SK-N-SH (cell line): ENCODE measurements at regions of chr14 and their contacts with region 1.

Region 1: DNA sequence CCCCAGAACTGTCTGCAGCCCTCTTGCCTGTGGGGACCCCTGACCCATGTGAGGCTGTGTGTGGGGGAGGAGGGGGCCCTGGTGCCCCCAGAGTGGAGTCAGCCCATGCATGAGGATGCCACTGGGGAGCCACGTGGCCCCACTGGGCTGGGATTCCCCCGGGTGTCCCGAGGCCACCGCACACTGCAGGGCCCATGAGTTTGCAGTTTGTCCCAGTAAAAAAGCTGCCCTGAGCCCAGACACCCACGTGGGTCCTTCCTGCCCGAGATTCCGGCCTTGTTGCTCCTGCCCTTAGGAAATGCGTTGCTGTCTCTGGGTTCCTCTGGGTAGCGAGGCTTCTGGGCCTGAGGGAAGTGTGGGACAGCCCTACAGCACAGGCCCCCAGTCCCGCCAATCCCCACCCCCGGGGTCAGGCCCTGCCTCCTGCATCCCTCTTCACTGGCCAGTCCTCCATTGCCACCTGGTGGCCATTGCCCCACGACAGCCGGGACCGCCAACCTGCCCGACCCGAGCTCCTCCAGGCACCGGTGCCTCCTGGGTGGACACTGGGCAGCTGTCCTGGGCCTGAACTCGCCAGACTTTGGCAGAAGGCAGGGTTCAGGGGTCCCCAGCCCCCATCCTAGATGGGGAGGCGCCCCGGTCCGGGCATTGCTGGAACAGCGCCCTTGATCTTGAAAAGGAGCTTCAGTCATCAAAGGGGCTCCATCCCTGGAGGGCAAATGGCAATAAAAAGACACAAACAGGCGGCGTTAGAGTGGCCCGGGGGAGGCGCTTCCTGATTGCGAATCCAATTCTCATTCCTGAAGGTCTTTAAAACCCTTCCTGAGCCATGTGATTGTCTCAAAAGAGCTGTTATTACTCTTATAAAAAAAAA is 15.6 kb upstream of the C14orf180 start:
- DNase-seq: peak; percentile 98
- H3K4me3 ChIP-seq: no peak overlapping the region; a peak in 1 of 4 replicates
- H3K27ac ChIP-seq: peak overlapping the region in 1 of 2 experiments; percentile 71; a peak in 2 of 4 replicates
- H3K4me1 ChIP-seq: peaks cover 0 to 65% of the 10 kb centered on the region in 2 experiments; a peak in 1 of 4 replicates
- H3K27me3 ChIP-seq: no peaks in the 10 kb centered on the region
- CTCF ChIP-seq: peak; percentile 78
- EP300 ChIP-seq: no peak
- RAD21 ChIP-seq: peak; percentile 94

Region 2: DNA sequence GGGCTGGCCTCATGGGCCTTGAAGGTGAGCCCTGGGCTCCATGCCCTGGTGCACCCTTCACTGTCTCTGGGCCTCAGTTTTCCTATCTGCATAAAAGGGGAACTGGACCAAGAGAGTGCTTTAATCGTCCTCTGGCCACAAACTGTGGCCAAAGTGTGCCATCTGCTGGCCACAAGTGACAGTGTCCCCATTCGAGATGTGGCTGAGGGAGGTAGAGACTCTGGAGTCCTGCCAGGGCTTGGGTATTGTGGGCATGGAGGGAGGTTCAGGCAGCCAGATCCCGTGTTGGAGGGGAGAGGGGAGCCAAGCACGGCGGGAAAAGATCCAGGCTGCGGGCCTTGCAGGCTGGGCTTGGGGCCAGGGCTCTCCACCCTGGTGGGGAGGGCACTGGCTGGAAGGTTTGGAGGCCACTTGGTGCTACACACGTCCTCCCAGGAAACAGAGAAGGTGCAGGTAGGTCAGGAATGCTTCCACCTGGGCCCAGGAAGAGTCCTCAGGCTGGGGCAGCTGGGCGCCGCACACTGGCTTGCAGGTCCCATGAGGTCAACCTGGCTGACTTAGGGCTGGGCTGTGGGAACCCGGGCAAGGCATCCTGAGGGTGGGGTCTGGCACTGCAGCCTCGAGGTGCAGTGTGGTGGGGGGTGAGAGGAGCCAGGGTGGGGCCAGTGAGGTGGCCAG is 432.9 kb before region 1 on chr14:
- CTCF ChIA-PET with region 1: interaction called, 21 read pairs
- POLR2A ChIA-PET with region 1: no interaction called
- DNase-seq: peak; percentile 87
- H3K4me3 ChIP-seq: peak overlapping the region in 1 of 2 experiments; percentile 44; a peak in 1 of 4 replicates
- H3K27ac ChIP-seq: no peak overlapping the region
- H3K4me1 ChIP-seq: peaks cover 0 to 19% of the 10 kb centered on the region in 2 experiments; a peak in 1 of 4 replicates
- H3K27me3 ChIP-seq: peaks cover 9% of the 10 kb centered on the region
- CTCF ChIP-seq: peak; percentile 51
- EP300 ChIP-seq: no peak
- RAD21 ChIP-seq: peak; percentile 97

Region 3: GRCh38 chr14:104157016-104157928 is 406.7 kb before region 1 on chr14:
- CTCF ChIA-PET with region 1: interaction called, 23 read pairs
- POLR2A ChIA-PET with region 1: interaction called, 4 read pairs
- DNase-seq: peak; percentile 81
- H3K4me3 ChIP-seq: no peak overlapping the region
- H3K27ac ChIP-seq: peak overlapping the region in 1 of 2 experiments; percentile 96; a peak in 2 of 4 replicates
- H3K4me1 ChIP-seq: peaks cover 0 to 92% of the 10 kb centered on the region in 2 experiments; a peak in 1 of 4 replicates
- H3K27me3 ChIP-seq: no peaks in the 10 kb centered on the region
- CTCF ChIP-seq: peak; percentile 16
- EP300 ChIP-seq: no peak
- RAD21 ChIP-seq: peak; percentile 50

Region 4: DNA sequence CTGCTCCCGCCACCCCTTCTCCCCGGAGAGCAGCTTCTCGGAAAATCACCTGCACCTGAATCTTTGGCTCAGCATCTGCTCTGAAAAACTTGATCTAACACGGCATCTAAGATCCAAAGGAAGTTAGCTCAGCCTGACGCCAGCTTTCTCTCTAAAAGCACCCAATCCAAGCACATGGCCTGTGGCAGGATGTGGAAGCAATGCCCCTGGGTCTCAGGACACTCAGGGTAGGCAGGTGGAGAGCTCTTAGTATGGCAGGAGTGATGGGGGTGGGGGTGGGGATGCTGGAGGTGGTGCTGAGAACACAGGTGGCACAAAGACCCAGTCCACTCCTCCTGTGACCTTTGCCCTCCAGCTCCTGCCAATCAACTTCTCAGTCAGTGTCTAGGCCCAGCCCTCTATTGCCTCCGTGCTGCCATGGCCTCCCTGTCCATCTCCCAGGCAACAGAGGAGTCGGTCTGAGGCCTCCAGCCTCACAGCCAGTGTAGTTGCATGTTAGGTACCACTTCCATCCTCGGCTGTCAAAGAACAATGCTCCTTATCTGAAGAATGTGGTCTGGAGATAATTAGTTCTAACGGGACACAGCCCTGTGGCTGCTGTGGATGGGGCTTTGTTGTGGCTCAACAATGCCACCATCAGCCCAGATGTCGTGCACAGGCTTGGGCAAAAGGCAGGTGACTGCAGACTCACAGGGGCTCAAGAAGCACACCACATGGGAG is 164.4 kb before region 1 on chr14:
- CTCF ChIA-PET with region 1: interaction called, 11 read pairs
- POLR2A ChIA-PET with region 1: no interaction called
- DNase-seq: peak; percentile 84
- H3K4me3 ChIP-seq: no peak overlapping the region
- H3K27ac ChIP-seq: peak overlapping the region in 1 of 2 experiments; percentile 82; a peak in 2 of 4 replicates
- H3K4me1 ChIP-seq: peaks cover 0 to 17% of the 10 kb centered on the region in 2 experiments; a peak in 1 of 4 replicates
- H3K27me3 ChIP-seq: no peaks in the 10 kb centered on the region
- CTCF ChIP-seq: no peak
- EP300 ChIP-seq: peak in 1 of 2 experiments; percentile 76; a peak in 2 of 4 replicates
- RAD21 ChIP-seq: peak; percentile 83

Region 5: GRCh38 chr14:104473649-104474494 is 90.1 kb before region 1 on chr14:
- CTCF ChIA-PET with region 1: no interaction called
- POLR2A ChIA-PET with region 1: no interaction called
- DNase-seq: no peak
- H3K4me3 ChIP-seq: no peak overlapping the region
- H3K27ac ChIP-seq: no peak overlapping the region
- H3K4me1 ChIP-seq: peaks cover 0 to 11% of the 10 kb centered on the region in 2 experiments; a peak in 2 of 4 replicates
- H3K27me3 ChIP-seq: no peaks in the 10 kb centered on the region
- CTCF ChIP-seq: no peak
- EP300 ChIP-seq: no peak
- RAD21 ChIP-seq: no peak

Region 6: GRCh38 chr14:104545151-104545941 is 18.6 kb before region 1 on chr14:
- CTCF ChIA-PET with region 1: interaction called, 67 read pairs
- POLR2A ChIA-PET with region 1: no interaction called
- DNase-seq: no peak
- H3K4me3 ChIP-seq: no peak overlapping the region
- H3K27ac ChIP-seq: no peak overlapping the region
- H3K4me1 ChIP-seq: no peaks in the 10 kb centered on the region; a peak in 2 of 4 replicates
- H3K27me3 ChIP-seq: no peaks in the 10 kb centered on the region
- CTCF ChIP-seq: no peak
- EP300 ChIP-seq: no peak
- RAD21 ChIP-seq: no peak

Region 7: DNA sequence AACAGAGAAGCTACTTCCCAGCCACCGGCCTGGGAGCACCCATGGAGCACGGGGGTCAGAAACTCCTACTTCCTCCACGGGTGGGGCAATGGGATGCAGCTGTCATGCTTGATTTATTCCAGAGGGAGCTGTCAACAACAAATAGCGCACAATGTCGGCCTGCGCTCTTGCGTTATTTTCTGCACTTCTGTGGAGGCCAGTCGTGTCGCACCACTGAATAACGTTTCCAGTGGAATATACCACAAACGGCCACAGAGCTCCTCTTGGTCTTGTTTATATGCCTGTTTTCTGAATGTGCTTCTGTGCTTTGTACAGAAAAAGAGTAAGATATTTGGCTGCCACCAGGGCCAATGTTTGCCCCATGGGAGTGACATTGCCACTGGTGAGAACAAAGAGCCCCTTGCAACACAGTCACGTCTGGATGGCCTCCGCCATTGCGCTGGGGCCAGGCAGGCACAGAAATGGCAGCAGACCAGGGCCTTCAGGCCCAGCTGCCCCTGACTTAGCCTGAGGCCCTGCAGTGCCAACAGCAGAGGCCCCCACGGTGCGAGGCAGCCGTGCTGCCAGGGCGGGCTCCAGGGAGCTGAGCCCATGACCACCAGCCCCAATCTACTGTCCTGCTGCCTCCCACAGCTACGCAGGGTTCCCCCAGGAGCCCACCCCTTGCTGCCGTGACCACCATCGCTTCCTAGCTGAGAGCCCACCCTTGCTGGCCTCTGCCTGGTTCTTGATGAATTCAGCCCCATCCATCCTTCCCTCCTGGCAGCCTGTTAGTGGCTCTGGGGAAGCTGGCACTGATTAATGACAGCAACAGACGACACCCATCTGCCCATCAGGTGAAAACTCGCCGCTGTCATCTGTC is 69.5 kb after region 1 on chr14:
- CTCF ChIA-PET with region 1: interaction called, 55 read pairs
- POLR2A ChIA-PET with region 1: no interaction called
- DNase-seq: peak; percentile 51
- H3K4me3 ChIP-seq: no peak overlapping the region
- H3K27ac ChIP-seq: peak overlapping the region in 1 of 2 experiments; percentile 14; a peak in 1 of 4 replicates
- H3K4me1 ChIP-seq: peaks cover 0 to 8% of the 10 kb centered on the region in 2 experiments; a peak in 2 of 4 replicates
- H3K27me3 ChIP-seq: no peaks in the 10 kb centered on the region
- CTCF ChIP-seq: no peak
- EP300 ChIP-seq: no peak
- RAD21 ChIP-seq: no peak; the same call in 1 of the 2 replicates

Region 8: DNA sequence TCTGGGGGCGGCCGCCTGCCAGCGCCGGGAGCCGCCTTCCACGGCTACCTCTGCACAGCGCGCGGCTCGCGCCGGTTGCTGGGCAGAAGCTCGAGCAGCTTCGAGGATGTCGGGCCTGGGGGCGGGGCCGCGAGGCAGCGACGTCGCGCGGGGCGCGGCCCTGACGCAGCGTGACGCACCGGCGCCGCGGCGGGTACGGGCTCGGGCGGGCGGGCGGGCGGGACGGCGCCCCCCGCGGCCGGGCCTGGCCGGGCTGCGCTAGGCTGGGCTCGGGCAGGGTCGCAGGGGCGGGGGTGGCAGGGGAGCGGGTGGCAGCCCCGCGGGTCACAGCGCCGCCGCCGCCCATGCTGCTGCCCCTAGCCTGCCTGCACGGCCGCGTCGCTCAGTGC is 684.4 kb after region 1 on chr14 and contains the start of gene BTBD6:
- CTCF ChIA-PET with region 1: no interaction called
- POLR2A ChIA-PET with region 1: no interaction called
- DNase-seq: peak; percentile 99
- H3K4me3 ChIP-seq: peak within 1 kb of the TSS; percentile 54 to 58
- H3K27ac ChIP-seq: peak within 1 kb of the TSS; percentile 14 to 64; a peak in 3 of 4 replicates
- H3K4me1 ChIP-seq: peaks cover 8 to 11% of the 10 kb centered on the region in 2 experiments; a peak in 2 of 4 replicates
- H3K27me3 ChIP-seq: no peaks in the 10 kb centered on the region
- CTCF ChIP-seq: no peak
- EP300 ChIP-seq: no peak
- RAD21 ChIP-seq: no peak; the same call in 1 of the 2 replicates
- polyA plus RNA-seq, gene BTBD6: 20.9 and 21.0 TPM in 2 replicates